Upper lobe of right lung (tissue), 1 donor: ENCODE measurements at regions of chr3 and their contacts with region 1.

Region 1: GRCh38 chr3:129942296-129942695 is 32.2 kb upstream of the TRH start:
- DNase-seq: peak; percentile 72
- ATAC-seq: peak; percentile 94
- H3K4me3 ChIP-seq: no peak overlapping the region
- H3K27ac ChIP-seq: no peak overlapping the region
- H3K4me1 ChIP-seq: no peaks in the 10 kb centered on the region
- H3K27me3 ChIP-seq: no peaks in the 10 kb centered on the region
- CTCF ChIP-seq: peak; percentile 77

Region 2: GRCh38 chr3:129305592-129306091 is 636.7 kb before region 1 on chr3:
- intact Hi-C with region 1: no loop called
- DNase-seq: peak; percentile 95
- ATAC-seq: peak; percentile 97
- H3K4me3 ChIP-seq: peak overlapping the region; percentile 28
- H3K27ac ChIP-seq: peak overlapping the region; percentile 74
- H3K4me1 ChIP-seq: peaks cover 14% of the 10 kb centered on the region
- H3K27me3 ChIP-seq: no peaks in the 10 kb centered on the region
- CTCF ChIP-seq: no peak

Region 3: DNA sequence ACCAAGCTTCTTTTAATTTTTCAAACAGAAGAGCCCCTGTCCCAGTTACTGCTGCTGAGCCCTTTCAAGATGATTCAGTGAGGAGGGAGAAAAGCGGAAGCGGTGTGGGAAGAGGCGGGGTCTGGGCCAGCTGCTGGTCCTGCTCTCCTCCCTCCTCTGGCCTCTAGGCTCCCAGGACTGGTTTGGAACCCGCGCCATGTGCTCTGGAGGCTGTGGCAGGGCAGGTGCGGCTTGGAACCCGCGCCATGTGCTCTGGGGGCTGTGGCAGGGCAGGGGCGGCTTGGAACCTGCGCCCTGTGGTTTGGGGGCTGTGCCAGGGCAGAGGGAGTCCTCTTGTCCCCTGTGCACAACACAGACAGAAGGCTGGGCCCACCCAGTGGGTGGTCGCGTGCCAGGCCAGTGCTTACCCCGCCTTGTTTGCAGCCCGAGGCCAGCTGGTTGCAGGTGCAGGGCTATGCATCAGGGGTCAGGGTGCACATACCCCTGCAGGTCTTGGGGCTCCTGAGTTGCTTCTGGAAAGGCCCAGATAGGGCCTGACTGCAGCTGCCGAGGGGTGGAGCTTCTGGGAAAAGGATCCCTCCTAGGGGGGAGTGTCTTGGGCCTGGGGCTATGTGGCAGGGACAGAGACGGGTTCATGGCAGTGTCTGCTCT is 151.6 kb after region 1 on chr3:
- intact Hi-C with region 1: loop called (anchors 10 kb)
- DNase-seq: no peak
- ATAC-seq: no peak
- H3K4me3 ChIP-seq: peak overlapping the region; percentile 19
- H3K27ac ChIP-seq: no peak overlapping the region
- H3K4me1 ChIP-seq: no peaks in the 10 kb centered on the region
- H3K27me3 ChIP-seq: no peaks in the 10 kb centered on the region
- CTCF ChIP-seq: no peak